ENCODE measurements at regions of chr11 and their contacts with region 1.

Region 1: DNA sequence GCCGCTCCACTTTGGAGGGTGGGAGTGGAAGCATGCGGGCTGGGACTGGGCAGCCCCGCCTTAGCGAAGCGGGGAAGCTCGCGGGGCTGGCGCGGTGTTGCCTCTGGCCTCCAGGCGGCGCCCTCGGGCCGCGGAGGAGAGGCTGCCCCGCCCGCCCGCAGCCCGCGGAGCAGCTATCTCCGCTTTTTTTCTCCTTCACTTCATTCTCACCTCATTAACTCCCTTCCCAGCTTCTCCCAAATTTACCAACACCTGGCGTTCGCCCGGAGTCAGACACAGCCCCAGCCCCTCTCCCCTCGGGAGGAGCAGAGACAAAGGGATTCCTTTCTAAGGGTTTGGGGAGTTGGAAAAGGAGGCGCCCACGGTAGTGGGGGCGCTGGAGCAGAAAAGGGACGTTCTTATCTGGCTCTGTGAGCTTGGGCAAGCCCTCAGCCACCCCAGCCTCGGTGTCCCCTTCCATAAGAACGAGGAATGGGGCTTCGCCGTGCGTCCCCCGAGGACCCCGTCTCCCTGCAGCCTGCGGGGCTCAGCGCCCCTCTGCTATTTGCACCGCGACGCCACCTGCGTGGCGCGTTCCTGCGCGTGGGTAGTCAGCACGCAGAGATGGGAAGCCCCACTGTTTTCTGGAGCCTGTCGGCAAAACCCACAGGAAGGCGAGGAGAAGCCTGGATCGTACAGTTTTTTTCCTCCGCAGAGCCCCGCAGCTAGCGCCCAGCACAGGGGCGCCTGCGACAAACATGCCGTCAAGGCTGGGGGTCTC is 1.5 kb upstream of the WNT11 start:
- DNase-seq: peak; percentile 79 to 91 (median 84)
- ATAC-seq: peak; percentile 61 to 80 (median 71)
- H3K4me3 ChIP-seq: peak overlapping the region; percentile 45 to 82 (median 68)
- H3K27ac ChIP-seq: peak overlapping the region in 8 of 12 donors; percentile 55 to 84 (median 75)
- H3K4me1 ChIP-seq: peaks cover 0 to 61% (median 34%) of the 10 kb centered on the region in 12 donors
- H3K27me3 ChIP-seq: peaks cover 0 to 75% (median 0%) of the 10 kb centered on the region in 9 donors
- CTCF ChIP-seq: peak; percentile 96 to 99 (median 98)
- POLR2A ChIP-seq: no peak

Region 2: GRCh38 chr11:76152086-76152681 is 55.6 kb before region 1 on chr11:
- intact Hi-C with region 1: no loop called
- DNase-seq: peak; percentile 86 to 95 (median 89)
- ATAC-seq: peak; percentile 80 to 92 (median 91)
- H3K4me3 ChIP-seq: peak overlapping the region in 11 of 12 donors; percentile 19 to 66 (median 48)
- H3K27ac ChIP-seq: peak overlapping the region in 4 of 12 donors; percentile 4 to 34 (median 20)
- H3K4me1 ChIP-seq: peaks cover 0 to 17% (median 12%) of the 10 kb centered on the region in 12 donors
- H3K27me3 ChIP-seq: no peaks in the 10 kb centered on the region
- CTCF ChIP-seq: peak; percentile 93 to 97 (median 96)
- POLR2A ChIP-seq: no peak

Region 3: DNA sequence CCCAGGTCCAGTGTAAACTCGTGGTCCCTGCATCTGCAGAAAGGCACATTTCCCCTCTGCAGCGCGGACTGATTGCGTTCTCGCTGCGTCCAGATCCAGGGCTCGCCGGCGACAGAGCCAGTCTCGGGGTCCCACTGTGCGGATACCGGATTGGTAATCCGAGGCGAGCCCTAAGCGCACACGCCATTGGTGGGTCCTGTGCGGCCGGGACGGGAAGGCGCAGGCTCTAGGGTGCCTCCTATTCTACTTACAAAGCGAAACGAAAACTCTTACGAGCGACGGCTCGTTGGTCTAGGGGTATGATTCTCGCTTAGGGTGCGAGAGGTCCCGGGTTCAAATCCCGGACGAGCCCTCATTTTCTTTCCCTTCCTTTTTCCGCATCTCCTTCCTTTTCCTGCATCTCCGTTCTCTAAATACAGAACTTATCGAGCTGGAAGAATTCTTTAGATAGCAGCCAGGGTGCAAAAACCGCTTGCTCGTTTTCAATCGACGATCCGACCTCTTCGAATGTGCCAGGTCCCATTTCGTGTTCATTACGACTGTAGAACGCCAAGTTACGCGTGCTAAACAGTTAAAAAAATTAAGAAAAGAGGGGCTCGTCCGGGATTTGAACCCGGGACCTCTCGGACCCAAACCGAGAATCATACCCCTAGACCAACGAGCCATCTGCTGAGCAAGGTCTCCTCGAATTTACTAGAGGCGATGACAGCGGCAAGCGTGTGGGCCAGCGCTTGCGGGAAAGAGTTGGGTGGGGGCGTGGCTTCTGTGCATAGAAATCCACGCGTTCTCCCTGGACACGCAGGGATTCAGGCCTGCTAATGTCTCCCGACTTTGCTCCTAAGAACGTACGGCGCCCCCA is 27.6 kb after region 1 on chr11:
- intact Hi-C with region 1: loop called in 5 of 10 experiments (anchors 1 to 2 kb)
- DNase-seq: peak; percentile 90 to 94 (median 91)
- ATAC-seq: peak; percentile 90 to 92 (median 92)
- H3K4me3 ChIP-seq: peak overlapping the region; percentile 69 to 93 (median 80)
- H3K27ac ChIP-seq: peak overlapping the region; percentile 35 to 90 (median 81)
- H3K4me1 ChIP-seq: peaks cover 0 to 21% (median 8%) of the 10 kb centered on the region in 12 donors
- H3K27me3 ChIP-seq: no peaks in the 10 kb centered on the region
- CTCF ChIP-seq: no peak
- POLR2A ChIP-seq: no peak

Region 4: GRCh38 chr11:76288166-76288980 is 80.6 kb after region 1 on chr11:
- intact Hi-C with region 1: no loop called
- DNase-seq: no peak
- ATAC-seq: no peak
- H3K4me3 ChIP-seq: no peak overlapping the region
- H3K27ac ChIP-seq: no peak overlapping the region
- H3K4me1 ChIP-seq: peaks cover 0 to 9% (median 0%) of the 10 kb centered on the region in 12 donors
- H3K27me3 ChIP-seq: no peaks in the 10 kb centered on the region
- CTCF ChIP-seq: no peak
- POLR2A ChIP-seq: no peak

Region 5: DNA sequence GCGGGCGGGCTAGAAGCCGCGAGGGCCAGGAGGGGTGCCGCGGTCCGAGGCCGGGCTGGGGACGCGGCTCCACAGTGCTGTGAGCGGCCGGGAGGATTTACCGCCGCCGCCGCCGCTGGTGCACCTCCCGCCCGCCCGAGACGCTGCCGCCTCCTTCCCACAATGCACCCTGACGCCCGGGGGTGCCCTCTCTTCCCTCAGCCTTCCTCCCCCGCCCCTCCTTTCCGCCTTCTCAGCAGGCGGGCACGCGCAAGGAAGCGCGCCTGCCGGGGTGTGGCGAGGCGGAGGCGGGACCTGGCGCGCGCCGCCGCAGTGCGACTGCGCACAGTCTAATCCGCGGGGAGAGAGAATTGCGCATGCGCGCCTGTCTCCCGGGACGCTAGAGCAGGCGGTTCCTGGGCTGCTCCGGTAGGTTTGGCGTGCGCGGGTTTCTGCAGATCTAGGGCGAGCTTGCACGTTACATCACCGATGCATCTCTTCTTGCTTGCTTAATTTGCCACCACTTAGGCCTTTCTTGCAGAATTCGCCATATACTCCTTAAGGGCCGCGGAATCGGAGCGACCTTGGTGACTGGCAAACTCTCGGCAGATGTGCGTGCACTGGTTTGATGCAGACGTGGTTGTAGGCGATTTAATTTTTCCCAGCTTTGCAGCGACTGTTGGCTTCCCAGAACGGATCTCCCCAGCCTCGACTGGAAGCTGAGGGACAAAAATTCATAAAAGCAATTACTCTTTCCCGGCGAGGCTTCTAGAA is 173.3 kb after region 1 on chr11 and contains the starts of genes GVQW3 and THAP12:
- intact Hi-C with region 1: loop called in 2 of 10 experiments (anchors 5 kb)
- DNase-seq: peak; percentile 97 to 99 (median 98)
- ATAC-seq: peak; percentile 97 to 99 (median 98)
- H3K4me3 ChIP-seq: peak within 1 kb of the TSS; percentile 72 to 99 (median 93)
- H3K27ac ChIP-seq: peak within 1 kb of the TSS; percentile 82 to 92 (median 87)
- H3K4me1 ChIP-seq: peaks cover 0 to 53% (median 29%) of the 10 kb centered on the region in 12 donors
- H3K27me3 ChIP-seq: no peaks in the 10 kb centered on the region
- CTCF ChIP-seq: peak in 6 of 12 donors; percentile 14 to 59 (median 35)
- POLR2A ChIP-seq: peak; percentile 28 to 91
- total RNA-seq, gene GVQW3: 0.19 to 2.3 (median 1.2) TPM
- total RNA-seq, gene THAP12: 14.2 to 29.3 (median 19.5) TPM

Region 6: DNA sequence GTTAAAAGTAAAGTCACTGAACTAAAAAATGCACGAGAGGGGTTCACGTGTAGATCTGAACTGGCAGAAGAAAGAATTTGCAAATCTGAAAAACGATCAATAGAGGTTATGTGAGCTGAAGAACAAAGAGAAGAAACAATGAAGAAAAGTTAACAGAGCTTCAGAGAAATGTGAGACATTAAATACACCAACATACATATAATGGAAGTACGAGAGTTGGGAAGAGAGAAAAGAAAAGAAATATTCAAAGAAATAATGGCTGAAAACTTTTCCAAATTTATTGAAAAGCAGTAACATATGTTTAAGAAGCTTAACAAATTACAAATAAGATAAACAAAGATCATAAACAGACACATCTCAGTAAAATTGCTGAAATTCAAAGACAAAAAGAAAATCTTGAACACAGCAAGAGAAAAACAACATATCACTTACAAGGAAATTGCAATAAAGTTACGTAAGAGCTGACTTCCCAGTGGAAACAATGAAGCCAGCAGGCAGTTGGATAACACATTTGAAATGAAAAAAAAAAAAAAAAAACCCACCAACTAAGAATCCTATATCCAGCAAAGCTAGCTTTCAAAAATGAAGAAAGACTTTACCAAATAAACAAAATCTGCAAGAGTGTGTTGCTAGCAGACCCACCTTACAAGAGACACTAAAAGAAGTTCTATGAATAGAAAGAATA is 293.8 kb after region 1 on chr11:
- intact Hi-C with region 1: loop called in 1 of 10 experiments (anchors 10 kb)
- DNase-seq: no peak
- ATAC-seq: no peak
- H3K4me3 ChIP-seq: no peak overlapping the region
- H3K27ac ChIP-seq: no peak overlapping the region
- H3K4me1 ChIP-seq: no peaks in the 10 kb centered on the region
- H3K27me3 ChIP-seq: no peaks in the 10 kb centered on the region
- CTCF ChIP-seq: no peak
- POLR2A ChIP-seq: no peak

Region 7: GRCh38 chr11:76680518-76681425 is 472.9 kb after region 1 on chr11:
- intact Hi-C with region 1: loop called in 3 of 10 experiments (anchors 5 to 10 kb)
- DNase-seq: peak; percentile 76 to 84 (median 78)
- ATAC-seq: peak; percentile 60 to 89 (median 81)
- H3K4me3 ChIP-seq: peak overlapping the region in 1 of 12 donors; percentile 0
- H3K27ac ChIP-seq: peak overlapping the region in 1 of 12 donors; percentile 20
- H3K4me1 ChIP-seq: peaks cover 0 to 17% (median 5%) of the 10 kb centered on the region in 12 donors
- H3K27me3 ChIP-seq: no peaks in the 10 kb centered on the region
- CTCF ChIP-seq: peak; percentile 79 to 95 (median 86)
- POLR2A ChIP-seq: no peak

Measured in heart left ventricle (tissue), 16 donors.